ENCODE measurements at regions of chr19 and their contacts with region 1.

Region 1: GRCh38 chr19:18428787-18429674 is 8.9 kb downstream of the ISYNA1 start:
- DNase-seq: peak; percentile 88 to 95 (median 92)
- H3K4me3 ChIP-seq: peak overlapping the region; percentile 36
- H3K27ac ChIP-seq: peak overlapping the region; percentile 77 to 87
- H3K4me1 ChIP-seq: peaks cover 26% of the 10 kb centered on the region
- H3K27me3 ChIP-seq: no peaks in the 10 kb centered on the region
- CTCF ChIP-seq: no peak
- EP300 ChIP-seq: no peak
- POLR2A ChIP-seq: peak; percentile 32

Region 2: GRCh38 chr19:18007044-18007916 is 421.8 kb before region 1 on chr19:
- intact Hi-C with region 1: loop called in 1 of 4 experiments (anchors 10 kb)
- DNase-seq: peak; percentile 73 to 90 (median 79)
- H3K4me3 ChIP-seq: peak overlapping the region; percentile 43
- H3K27ac ChIP-seq: peak overlapping the region; percentile 17 to 60
- H3K4me1 ChIP-seq: peaks cover 5% of the 10 kb centered on the region
- H3K27me3 ChIP-seq: no peaks in the 10 kb centered on the region
- CTCF ChIP-seq: peak; percentile 91 to 94 (median 93)
- EP300 ChIP-seq: no peak
- POLR2A ChIP-seq: no peak

Region 3: GRCh38 chr19:18469069-18469846 is 40.2 kb after region 1 on chr19:
- intact Hi-C with region 1: no loop called
- DNase-seq: peak; percentile 52 to 79 (median 70)
- H3K4me3 ChIP-seq: no peak overlapping the region
- H3K27ac ChIP-seq: no peak overlapping the region
- H3K4me1 ChIP-seq: peaks cover 43% of the 10 kb centered on the region
- H3K27me3 ChIP-seq: no peaks in the 10 kb centered on the region
- CTCF ChIP-seq: peak; percentile 35 to 59 (median 50)
- EP300 ChIP-seq: no peak
- POLR2A ChIP-seq: no peak

Region 4: DNA sequence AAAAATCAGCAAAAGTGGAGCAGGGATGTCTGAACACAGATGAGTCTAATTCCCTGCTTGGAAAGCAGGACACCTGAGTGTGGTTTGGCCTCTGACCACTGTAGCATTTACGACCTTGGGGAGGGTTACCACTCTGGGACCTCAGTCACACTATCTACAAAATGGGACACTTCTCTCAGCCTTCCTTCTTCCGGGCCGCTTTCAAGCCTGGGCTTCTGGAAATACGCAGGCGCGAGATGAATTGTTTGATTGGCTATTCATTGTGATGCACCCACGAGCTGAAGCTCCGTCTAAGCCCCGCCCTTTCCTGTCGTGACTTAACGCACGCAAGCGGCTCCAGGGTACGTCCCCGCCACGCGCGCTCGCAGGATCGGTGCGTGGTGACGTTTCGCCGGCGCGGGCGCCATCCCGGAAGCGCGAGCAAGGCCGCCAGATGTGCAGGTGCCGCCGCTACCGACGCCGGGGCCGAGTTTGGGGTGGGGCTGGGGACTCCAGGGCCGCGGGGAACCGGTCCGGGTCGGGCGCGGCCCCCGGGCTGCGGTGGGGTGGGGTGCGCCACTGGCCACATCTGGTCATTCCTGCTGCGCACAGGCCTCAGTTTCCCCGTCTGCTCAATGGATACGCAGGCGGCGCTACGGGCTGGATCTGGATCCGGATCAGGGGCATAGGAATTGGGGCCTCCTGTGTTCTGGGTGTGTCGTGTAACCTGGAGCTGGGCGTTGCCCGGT is 128.6 kb after region 1 on chr19 and contains the start of gene KXD1:
- intact Hi-C with region 1: no loop called
- DNase-seq: peak; percentile 94 to 97 (median 96)
- H3K4me3 ChIP-seq: peak within 1 kb of the TSS; percentile 98
- H3K27ac ChIP-seq: peak within 1 kb of the TSS; percentile 70 to 92
- H3K4me1 ChIP-seq: no peaks in the 10 kb centered on the region
- H3K27me3 ChIP-seq: no peaks in the 10 kb centered on the region
- CTCF ChIP-seq: no peak
- EP300 ChIP-seq: peak; percentile 69
- POLR2A ChIP-seq: peak; percentile 87
- total RNA-seq, gene KXD1: 63.5 to 76.7 (median 65.9) TPM